HCT116 (cell line): ENCODE measurements at regions of chrX and their contacts with region 1.

Region 1: GRCh38 chrX:49029876-49030275 is 13.3 kb downstream of the TFE3 start:
- DNase-seq: peak; percentile 37
- ATAC-seq: peak; percentile 97
- H3K4me3 ChIP-seq: no peak overlapping the region
- H3K27ac ChIP-seq: no peak overlapping the region
- H3K4me1 ChIP-seq: peaks cover 3% of the 10 kb centered on the region in 2 experiments; a peak in 2 of 4 replicates
- H3K27me3 ChIP-seq: no peaks in the 10 kb centered on the region
- CTCF ChIP-seq: no peak
- POLR2A ChIP-seq: no peak
- RAD21 ChIP-seq: no peak

Region 2: DNA sequence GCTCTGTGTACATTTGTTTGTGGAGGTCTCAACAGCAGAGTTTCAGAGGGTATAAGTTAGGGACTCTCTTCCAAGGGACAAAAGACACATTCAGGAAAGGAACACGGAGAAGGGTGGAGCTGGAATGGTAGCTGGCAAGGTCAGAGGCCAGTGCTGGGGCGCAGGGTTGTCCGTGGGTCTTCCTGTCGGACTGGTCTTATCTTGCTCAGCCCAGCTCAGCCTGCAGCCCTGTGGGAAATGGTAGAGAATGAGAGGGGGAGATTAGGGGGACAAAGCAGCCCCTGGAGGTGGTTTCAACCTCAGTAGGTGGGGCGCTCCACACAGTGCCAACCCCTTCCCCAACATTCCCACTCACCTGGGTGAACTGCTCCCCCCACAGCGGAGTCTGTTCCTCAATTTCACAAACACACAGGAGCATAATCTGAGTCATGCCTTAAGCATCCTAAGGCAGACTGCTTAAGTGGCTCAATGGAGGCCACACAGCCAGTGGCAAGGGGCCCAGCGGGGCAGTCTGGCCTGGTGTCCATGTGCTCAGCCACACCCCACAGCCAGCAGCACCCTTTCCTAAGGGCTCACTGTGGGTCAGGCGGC is 234.9 kb before region 1 on chrX:
- CTCF ChIA-PET with region 1: no interaction called
- POLR2A ChIA-PET with region 1: no interaction called
- RAD21 ChIA-PET with region 1: no interaction called
- intact Hi-C with region 1: no loop called
- DNase-seq: no peak
- ATAC-seq: peak; percentile 81
- H3K4me3 ChIP-seq: no peak overlapping the region
- H3K27ac ChIP-seq: no peak overlapping the region; the same call in 1 of the 2 replicates
- H3K4me1 ChIP-seq: peaks cover 11 to 19% of the 10 kb centered on the region in 2 experiments
- H3K27me3 ChIP-seq: no peaks in the 10 kb centered on the region
- CTCF ChIP-seq: no peak
- POLR2A ChIP-seq: no peak
- RAD21 ChIP-seq: no peak

Region 3: DNA sequence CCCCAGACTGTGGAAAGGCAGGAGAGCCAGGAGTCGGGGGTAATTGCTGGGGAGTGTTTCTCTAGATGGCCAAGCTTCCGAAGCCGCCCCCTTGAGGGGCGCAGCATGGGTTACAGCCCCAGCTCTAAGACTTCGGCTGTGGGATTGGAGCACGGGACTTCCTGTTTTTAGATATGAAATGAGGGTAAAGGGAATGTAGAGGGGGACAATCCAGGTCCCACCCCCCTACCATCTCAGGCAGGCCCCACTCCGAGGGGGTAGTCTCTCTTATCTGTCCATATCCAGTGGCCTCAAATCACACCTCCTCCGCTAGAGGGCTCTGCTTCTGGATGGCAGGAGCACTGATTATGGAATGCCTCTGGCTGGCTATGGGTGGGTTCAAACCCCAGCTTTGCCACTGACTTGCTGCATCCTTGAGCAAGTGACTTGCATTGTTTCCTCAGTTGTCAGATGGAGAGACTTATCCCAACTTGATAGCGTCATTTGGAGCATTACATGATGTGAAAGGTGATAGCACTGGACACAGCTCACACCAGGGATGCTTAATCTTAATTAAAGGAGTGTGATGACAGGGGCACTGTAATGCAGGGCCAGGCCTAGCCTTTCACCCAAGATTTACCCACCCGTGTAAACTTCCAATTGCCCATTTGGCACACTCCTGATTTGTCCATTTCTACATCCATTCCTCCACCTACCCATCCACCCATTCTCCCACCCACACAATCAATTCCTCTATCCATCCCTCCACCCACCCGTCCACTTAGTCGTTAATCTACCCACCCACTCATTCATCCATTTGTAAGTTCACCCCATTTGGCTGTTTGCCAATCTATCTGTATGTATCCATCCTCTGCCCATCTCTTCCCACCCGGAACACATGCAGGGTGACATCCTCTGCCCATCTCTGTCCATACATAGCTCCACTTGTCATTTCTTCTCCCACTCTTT is 57.4 kb before region 1 on chrX:
- CTCF ChIA-PET with region 1: no interaction called
- POLR2A ChIA-PET with region 1: no interaction called
- RAD21 ChIA-PET with region 1: no interaction called
- intact Hi-C with region 1: loop called (anchors 2 kb)
- DNase-seq: peak; percentile 10
- ATAC-seq: peak; percentile 91
- H3K4me3 ChIP-seq: no peak overlapping the region
- H3K27ac ChIP-seq: no peak overlapping the region
- H3K4me1 ChIP-seq: peaks cover 0 to under 1% of the 10 kb centered on the region in 2 experiments; a peak in 1 of 4 replicates
- H3K27me3 ChIP-seq: no peaks in the 10 kb centered on the region
- CTCF ChIP-seq: peak; percentile 40 to 60 (median 58); a peak in 5 of 6 replicates
- POLR2A ChIP-seq: no peak
- RAD21 ChIP-seq: peak; percentile 43